ENCODE measurements at regions of chr1 and their contacts with region 1.

Region 1: GRCh38 chr1:67685067-67685557 is at the start of gene GADD45A:
- DNase-seq: peak; percentile 97
- H3K4me3 Mint-ChIP-seq: peak within 1 kb of the TSS; percentile 99
- H3K27ac Mint-ChIP-seq: peak within 1 kb of the TSS; percentile 98
- H3K4me1 Mint-ChIP-seq: peaks cover 46% of the 10 kb centered on the region
- H3K27me3 Mint-ChIP-seq: no peaks in the 10 kb centered on the region
- total RNA-seq, gene GADD45A: 29.5 to 30.7 TPM

Region 2: DNA sequence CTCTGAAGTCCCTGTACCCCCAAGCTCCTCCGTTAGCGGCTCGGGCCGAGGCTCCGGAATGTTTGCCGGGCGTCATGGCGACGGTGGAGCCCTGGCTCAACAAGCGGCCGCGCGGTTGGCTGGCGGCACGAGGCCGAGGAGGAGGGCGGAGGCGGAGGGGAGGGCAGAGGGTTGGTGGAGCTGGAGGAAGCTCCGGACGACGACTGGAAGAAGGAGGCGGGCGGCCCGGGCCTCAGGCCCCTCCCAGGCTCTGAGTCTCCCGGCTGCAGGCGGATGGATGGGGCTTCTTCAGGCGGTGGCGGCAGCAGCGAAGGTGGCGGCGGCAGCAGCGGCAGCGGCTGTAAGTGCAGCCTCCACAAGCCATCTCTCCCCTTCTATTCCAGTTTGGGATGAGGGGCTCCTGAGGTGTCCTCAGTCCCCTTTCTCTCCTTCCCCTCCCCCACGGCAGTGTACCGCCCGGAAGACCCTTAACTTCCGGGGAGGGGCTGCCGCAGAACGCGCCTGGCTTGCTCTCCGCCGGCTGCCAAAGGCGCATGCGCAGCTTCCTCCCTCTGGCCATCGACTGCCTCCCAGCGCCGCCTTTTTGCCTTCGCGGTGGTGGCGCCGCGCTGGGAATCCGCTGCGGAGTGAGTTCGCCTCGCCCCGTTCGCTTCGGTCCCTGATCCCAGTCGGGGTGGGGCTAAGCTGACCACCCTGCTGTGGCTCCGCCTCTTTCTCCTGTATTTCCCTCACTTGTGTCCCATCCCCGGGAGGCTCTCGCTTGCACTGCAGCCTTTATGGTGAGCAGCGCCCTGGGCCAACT is 760.2 kb before region 1 on chr1 and contains the starts of genes DNAI4 and MIER1:
- CTCF ChIA-PET with region 1: no interaction called
- POLR2A ChIA-PET with region 1: interaction called, 14 read pairs
- DNase-seq: peak; percentile 99
- H3K4me3 Mint-ChIP-seq: peak within 1 kb of the TSS; percentile 91
- H3K27ac Mint-ChIP-seq: peak within 1 kb of the TSS; percentile 89
- H3K4me1 Mint-ChIP-seq: peaks cover 49% of the 10 kb centered on the region
- H3K27me3 Mint-ChIP-seq: no peaks in the 10 kb centered on the region
- total RNA-seq, gene DNAI4: 1.4 to 2.7 TPM
- total RNA-seq, gene MIER1: 61.7 to 62.0 TPM

Region 3: GRCh38 chr1:67332653-67333529 is 352.2 kb before region 1 on chr1:
- CTCF ChIA-PET with region 1: no interaction called
- POLR2A ChIA-PET with region 1: interaction called, 10 read pairs
- DNase-seq: peak; percentile 48
- H3K4me3 Mint-ChIP-seq: peak overlapping the region; percentile 25
- H3K27ac Mint-ChIP-seq: peak overlapping the region; percentile 89
- H3K4me1 Mint-ChIP-seq: peaks cover 82% of the 10 kb centered on the region
- H3K27me3 Mint-ChIP-seq: no peaks in the 10 kb centered on the region

Region 4: GRCh38 chr1:67561704-67562113 is 123.4 kb before region 1 on chr1:
- CTCF ChIA-PET with region 1: interaction called, 12 read pairs
- POLR2A ChIA-PET with region 1: no interaction called
- DNase-seq: peak; percentile 85
- H3K4me3 Mint-ChIP-seq: no peak overlapping the region
- H3K27ac Mint-ChIP-seq: no peak overlapping the region
- H3K4me1 Mint-ChIP-seq: peaks cover 6% of the 10 kb centered on the region
- H3K27me3 Mint-ChIP-seq: peaks cover 2% of the 10 kb centered on the region

Region 5: DNA sequence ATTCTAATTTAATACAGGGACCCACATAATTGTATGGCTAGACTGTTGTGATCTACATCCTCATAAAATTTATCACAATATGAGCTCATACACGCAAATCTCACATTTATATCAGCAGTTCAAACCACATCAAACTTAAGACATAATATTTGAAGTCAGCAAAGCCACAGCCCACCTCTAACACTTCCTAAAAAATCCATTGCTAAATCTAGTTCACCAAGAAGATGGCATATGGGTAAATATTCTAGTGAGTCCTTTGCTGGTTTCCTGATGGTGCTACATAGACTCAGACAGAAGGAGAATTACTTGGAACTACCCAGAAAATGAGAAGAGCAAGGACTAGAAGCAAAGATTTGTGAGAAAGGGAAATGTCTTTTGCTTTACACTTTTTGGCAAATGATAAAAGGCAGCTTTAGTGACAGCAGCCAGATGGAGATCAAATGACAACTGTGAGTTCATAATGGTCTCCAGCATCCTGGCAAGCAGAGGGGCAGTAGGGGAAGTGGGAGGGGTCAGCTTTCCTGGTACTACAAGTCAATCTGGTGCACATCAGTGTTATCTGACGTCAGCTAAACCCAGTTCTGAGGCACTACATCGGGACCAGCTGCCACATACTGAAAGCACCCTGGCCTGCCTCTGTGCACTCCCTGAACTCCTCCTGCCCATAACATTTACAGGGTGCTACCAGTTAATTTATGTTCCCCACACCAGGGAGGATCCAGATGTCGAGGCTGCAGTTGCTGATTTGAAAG is 10.7 kb before region 1 on chr1:
- CTCF ChIA-PET with region 1: interaction called, 4 read pairs
- POLR2A ChIA-PET with region 1: interaction called, 67 read pairs
- DNase-seq: peak; percentile 58
- H3K4me3 Mint-ChIP-seq: no peak overlapping the region
- H3K27ac Mint-ChIP-seq: peak overlapping the region; percentile 63
- H3K4me1 Mint-ChIP-seq: peaks cover 23% of the 10 kb centered on the region
- H3K27me3 Mint-ChIP-seq: peaks cover 26% of the 10 kb centered on the region

Region 6: GRCh38 chr1:67735806-67736627 is 50.9 kb after region 1 on chr1:
- CTCF ChIA-PET with region 1: interaction called, 5 read pairs
- POLR2A ChIA-PET with region 1: interaction called, 16 read pairs
- DNase-seq: peak; percentile 62
- H3K4me3 Mint-ChIP-seq: peak overlapping the region; percentile 54
- H3K27ac Mint-ChIP-seq: peak overlapping the region; percentile 76
- H3K4me1 Mint-ChIP-seq: peaks cover 14% of the 10 kb centered on the region
- H3K27me3 Mint-ChIP-seq: peaks cover 3% of the 10 kb centered on the region